ENCODE measurements at regions of chr17 and their contacts with region 1.

Region 1: DNA sequence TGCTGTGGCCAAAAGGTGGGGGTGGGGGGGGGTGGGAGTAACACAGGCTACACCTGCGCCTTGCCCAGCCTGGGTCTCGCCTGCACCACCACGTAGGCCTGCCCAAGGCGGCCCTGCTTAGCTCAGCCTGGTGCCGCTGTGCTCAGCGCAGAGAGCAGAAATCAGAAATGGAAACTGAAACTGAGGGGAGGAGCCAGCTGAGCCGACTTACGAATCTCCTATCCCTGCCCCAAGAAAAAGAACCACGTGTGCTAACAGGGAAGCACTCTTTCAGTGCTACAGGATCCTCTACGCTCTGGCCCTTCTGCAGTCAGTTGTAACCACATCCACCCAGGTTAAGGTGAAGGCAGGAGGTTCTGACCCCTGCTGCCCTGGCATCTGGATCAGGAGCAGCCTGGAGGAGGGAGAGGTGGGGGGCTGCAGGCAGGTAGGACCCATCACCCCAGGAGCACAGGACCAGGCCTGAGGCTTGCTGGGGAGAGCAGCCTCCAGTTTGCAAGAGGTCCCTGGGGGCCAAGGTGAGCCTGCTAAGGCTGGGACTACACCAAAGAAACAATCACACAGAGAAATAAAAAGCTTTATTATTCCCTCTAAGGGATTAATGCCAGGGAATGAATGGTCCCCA is at the start of gene DHX58:
- DNase-seq: peak; percentile 91
- ATAC-seq: peak; percentile 71
- H3K4me3 ChIP-seq: peak within 1 kb of the TSS; percentile 26 to 77 (median 53)
- H3K4me3 Mint-ChIP-seq: peak within 1 kb of the TSS; percentile 88
- H3K27ac ChIP-seq: peak within 1 kb of the TSS; percentile 85 to 88
- H3K27ac Mint-ChIP-seq: peak within 1 kb of the TSS; percentile 97
- H3K4me1 ChIP-seq: peaks cover 38 to 54% of the 10 kb centered on the region in 2 donors
- H3K4me1 Mint-ChIP-seq: peaks cover 57% of the 10 kb centered on the region
- H3K27me3 ChIP-seq: no peaks in the 10 kb centered on the region
- H3K27me3 Mint-ChIP-seq: no peaks in the 10 kb centered on the region
- CTCF ChIP-seq: no peak
- total RNA-seq, gene DHX58: 34.6 and 39.7 TPM in 2 replicates

Region 2: GRCh38 chr17:41738077-41738735 is 374.5 kb before region 1 on chr17:
- CTCF ChIA-PET with region 1: no interaction called
- POLR2A ChIA-PET with region 1: no interaction called
- intact Hi-C with region 1: loop called (anchors 1 kb)
- DNase-seq: peak; percentile 88
- ATAC-seq: peak; percentile 90
- H3K4me3 ChIP-seq: no peak overlapping the region
- H3K4me3 Mint-ChIP-seq: no peak overlapping the region
- H3K27ac ChIP-seq: no peak overlapping the region
- H3K27ac Mint-ChIP-seq: no peak overlapping the region
- H3K4me1 ChIP-seq: peaks cover 23 to 25% of the 10 kb centered on the region in 2 donors
- H3K4me1 Mint-ChIP-seq: peaks cover 11% of the 10 kb centered on the region
- H3K27me3 ChIP-seq: peaks cover 0 to 42% (median 27%) of the 10 kb centered on the region in 4 experiments
- H3K27me3 Mint-ChIP-seq: peaks cover 28% of the 10 kb centered on the region
- CTCF ChIP-seq: peak; percentile 99

Region 3: GRCh38 chr17:42019509-42020404 is 92.9 kb before region 1 on chr17 and contains the start of gene NKIRAS2:
- CTCF ChIA-PET with region 1: interaction called, 80 read pairs
- POLR2A ChIA-PET with region 1: interaction called, 11 read pairs
- intact Hi-C with region 1: loop called (anchors 1 kb)
- DNase-seq: peak; percentile 93
- ATAC-seq: peak; percentile 77
- H3K4me3 ChIP-seq: peak within 1 kb of the TSS; percentile 65 to 87 (median 73)
- H3K4me3 Mint-ChIP-seq: peak within 1 kb of the TSS; percentile 100
- H3K27ac ChIP-seq: peak within 1 kb of the TSS; percentile 28 to 78
- H3K27ac Mint-ChIP-seq: peak within 1 kb of the TSS; percentile 83
- H3K4me1 ChIP-seq: peaks cover 46 to 53% of the 10 kb centered on the region in 2 donors
- H3K4me1 Mint-ChIP-seq: peaks cover 64% of the 10 kb centered on the region
- H3K27me3 ChIP-seq: no peaks in the 10 kb centered on the region
- H3K27me3 Mint-ChIP-seq: no peaks in the 10 kb centered on the region
- CTCF ChIP-seq: peak; percentile 89
- total RNA-seq, gene NKIRAS2: 22.0 and 23.7 TPM in 2 replicates

Region 4: DNA sequence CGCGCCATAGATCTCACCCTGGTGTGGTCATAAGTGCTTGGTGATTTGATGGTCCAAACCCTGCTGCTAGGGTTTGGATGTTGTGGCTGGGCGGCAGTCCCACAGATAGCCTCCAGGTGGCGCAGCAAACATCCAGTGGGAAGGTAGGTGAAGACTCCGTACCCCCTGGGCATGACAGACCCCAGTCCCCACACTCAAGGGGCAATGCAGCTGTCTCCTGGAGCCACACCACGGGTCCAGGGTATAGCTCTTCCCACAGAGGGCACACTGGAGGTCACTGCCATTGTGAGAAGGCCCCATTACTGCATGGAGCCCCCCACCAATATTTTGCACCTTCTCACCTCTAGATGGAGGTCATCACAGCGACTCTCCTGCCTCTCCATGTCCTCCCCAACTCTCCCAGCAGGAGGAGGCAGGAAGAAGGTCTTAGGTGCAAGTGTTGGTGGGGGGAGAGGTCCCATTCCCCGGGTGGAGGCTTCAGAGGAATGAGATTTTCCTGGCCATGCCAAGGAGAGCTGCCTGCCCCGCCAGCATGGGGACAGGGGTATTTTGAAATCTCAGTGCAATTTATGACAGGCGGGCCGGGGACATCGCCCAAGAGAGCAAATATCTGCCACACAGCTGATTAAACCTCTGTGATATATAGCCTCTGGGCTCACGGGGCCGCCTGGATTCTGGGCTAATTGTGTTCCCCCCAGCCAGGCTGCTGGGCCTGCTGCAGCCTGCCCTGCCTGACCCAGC is 45.1 kb before region 1 on chr17:
- CTCF ChIA-PET with region 1: interaction called, 89 read pairs
- POLR2A ChIA-PET with region 1: no interaction called
- intact Hi-C with region 1: loop called (anchors 1 kb)
- DNase-seq: peak; percentile 79
- ATAC-seq: peak; percentile 71
- H3K4me3 ChIP-seq: no peak overlapping the region
- H3K4me3 Mint-ChIP-seq: no peak overlapping the region
- H3K27ac ChIP-seq: no peak overlapping the region
- H3K27ac Mint-ChIP-seq: no peak overlapping the region
- H3K4me1 ChIP-seq: peaks cover 29 to 30% of the 10 kb centered on the region in 2 donors
- H3K4me1 Mint-ChIP-seq: peaks cover 24% of the 10 kb centered on the region
- H3K27me3 ChIP-seq: peaks cover 0 to 18% (median 7%) of the 10 kb centered on the region in 4 experiments
- H3K27me3 Mint-ChIP-seq: peaks cover 3% of the 10 kb centered on the region
- CTCF ChIP-seq: peak; percentile 91

Region 5: GRCh38 chr17:42153919-42154742 is 41.5 kb after region 1 on chr17:
- CTCF ChIA-PET with region 1: interaction called, 6 read pairs
- POLR2A ChIA-PET with region 1: interaction called, 6 read pairs
- intact Hi-C with region 1: loop called (anchors 1 kb)
- DNase-seq: no peak
- ATAC-seq: no peak
- H3K4me3 ChIP-seq: peak overlapping the region; percentile 91 to 100 (median 99)
- H3K4me3 Mint-ChIP-seq: peak overlapping the region; percentile 94
- H3K27ac ChIP-seq: peak overlapping the region; percentile 74 to 94
- H3K27ac Mint-ChIP-seq: peak overlapping the region; percentile 96
- H3K4me1 ChIP-seq: peaks cover 14 to 23% of the 10 kb centered on the region in 2 donors
- H3K4me1 Mint-ChIP-seq: peaks cover 34% of the 10 kb centered on the region
- H3K27me3 ChIP-seq: no peaks in the 10 kb centered on the region
- H3K27me3 Mint-ChIP-seq: no peaks in the 10 kb centered on the region
- CTCF ChIP-seq: no peak

Region 6: DNA sequence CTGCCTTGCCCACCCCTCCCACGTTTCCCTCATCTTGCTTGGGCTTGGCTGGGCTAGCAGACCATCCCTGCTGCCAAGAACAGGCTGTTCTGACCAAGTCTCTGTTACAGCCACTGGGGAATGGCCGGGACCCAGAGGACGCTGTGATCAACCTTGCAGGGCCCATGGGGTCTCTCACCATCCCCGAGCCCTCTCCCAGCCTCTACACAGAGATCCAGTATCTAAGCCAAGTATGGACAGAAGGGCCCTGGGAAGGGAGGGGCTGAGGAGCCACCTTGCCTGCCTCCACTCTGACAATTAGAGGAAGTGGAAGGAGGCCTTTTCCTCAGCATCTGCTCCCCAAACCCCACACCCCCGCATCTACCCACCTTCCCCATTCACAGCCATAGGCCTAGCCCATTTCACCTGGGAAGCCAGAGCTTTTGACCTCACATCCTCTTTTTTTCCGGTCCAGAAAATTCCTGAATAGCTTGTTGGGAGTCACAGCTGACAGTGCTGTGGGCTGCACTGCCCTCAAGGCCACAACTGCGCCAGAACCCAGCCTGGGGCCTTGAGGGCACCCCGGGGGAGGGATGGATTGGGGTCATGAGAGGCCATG is 1748.5 kb after region 1 on chr17:
- CTCF ChIA-PET with region 1: no interaction called
- POLR2A ChIA-PET with region 1: no interaction called
- intact Hi-C with region 1: no loop called
- DNase-seq: no peak
- ATAC-seq: no peak
- H3K4me3 ChIP-seq: no peak overlapping the region
- H3K4me3 Mint-ChIP-seq: no peak overlapping the region
- H3K27ac ChIP-seq: no peak overlapping the region
- H3K27ac Mint-ChIP-seq: no peak overlapping the region
- H3K4me1 ChIP-seq: no peaks in the 10 kb centered on the region
- H3K4me1 Mint-ChIP-seq: no peaks in the 10 kb centered on the region
- H3K27me3 ChIP-seq: peaks cover 0 to 23% (median 2%) of the 10 kb centered on the region in 4 experiments
- H3K27me3 Mint-ChIP-seq: peaks cover 38% of the 10 kb centered on the region
- CTCF ChIP-seq: no peak